T-cell (primary cell): ENCODE measurements at regions of chr2 and their contacts with region 1.

Region 1: GRCh38 chr2:68751397-68752339 is 17.1 kb downstream of the ARHGAP25 start:
- DNase-seq: peak; percentile 72 to 97 (median 89)
- ATAC-seq: peak; percentile 86 to 95 (median 88)
- H3K4me3 ChIP-seq: peak overlapping the region in 1 of 2 donors; percentile 20
- H3K4me3 Mint-ChIP-seq: peak overlapping the region; percentile 9 to 77 (median 43)
- H3K27ac ChIP-seq: peak overlapping the region; percentile 73
- H3K27ac Mint-ChIP-seq: peak overlapping the region; percentile 94 to 95
- H3K4me1 ChIP-seq: peaks cover 51 to 70% of the 10 kb centered on the region in 2 experiments
- H3K4me1 Mint-ChIP-seq: peaks cover 85 to 96% (median 94%) of the 10 kb centered on the region in 3 donors
- H3K27me3 ChIP-seq: no peaks in the 10 kb centered on the region
- H3K27me3 Mint-ChIP-seq: no peaks in the 10 kb centered on the region

Region 2: GRCh38 chr2:68441179-68441993 is 310.3 kb before region 1 on chr2:
- CTCF ChIA-PET with region 1: no interaction called
- POLR2A ChIA-PET with region 1: no interaction called
- DNase-seq: peak; percentile 47 to 95 (median 77)
- ATAC-seq: peak; percentile 92 to 97 (median 95)
- H3K4me3 ChIP-seq: no peak overlapping the region
- H3K4me3 Mint-ChIP-seq: no peak overlapping the region
- H3K27ac ChIP-seq: peak overlapping the region; percentile 67
- H3K27ac Mint-ChIP-seq: peak overlapping the region; percentile 71 to 87
- H3K4me1 ChIP-seq: peaks cover 0 to 12% of the 10 kb centered on the region in 2 experiments
- H3K4me1 Mint-ChIP-seq: peaks cover 0 to 24% (median 8%) of the 10 kb centered on the region in 3 donors
- H3K27me3 ChIP-seq: no peaks in the 10 kb centered on the region
- H3K27me3 Mint-ChIP-seq: no peaks in the 10 kb centered on the region

Region 3: GRCh38 chr2:68734688-68735525 is 16.8 kb before region 1 on chr2 and contains the start of gene ARHGAP25:
- CTCF ChIA-PET with region 1: interaction called, 19 to 78 read pairs
- POLR2A ChIA-PET with region 1: interaction called in 1 of 2 experiments, 3 read pairs
- DNase-seq: peak in 31 of 35 experiments; percentile 13 to 71 (median 40)
- ATAC-seq: peak; percentile 73 to 80 (median 78)
- H3K4me3 ChIP-seq: peak within 1 kb of the TSS; percentile 57 to 81
- H3K4me3 Mint-ChIP-seq: no peak within 1 kb of the TSS
- H3K27ac ChIP-seq: peak within 1 kb of the TSS; percentile 83
- H3K27ac Mint-ChIP-seq: no peak within 1 kb of the TSS
- H3K4me1 ChIP-seq: peaks cover 42 to 44% of the 10 kb centered on the region in 2 experiments
- H3K4me1 Mint-ChIP-seq: peaks cover 32 to 44% (median 43%) of the 10 kb centered on the region in 3 donors
- H3K27me3 ChIP-seq: no peaks in the 10 kb centered on the region
- H3K27me3 Mint-ChIP-seq: no peaks in the 10 kb centered on the region
- total RNA-seq, gene ARHGAP25: 103 to 134 (median 123) TPM

Region 4: DNA sequence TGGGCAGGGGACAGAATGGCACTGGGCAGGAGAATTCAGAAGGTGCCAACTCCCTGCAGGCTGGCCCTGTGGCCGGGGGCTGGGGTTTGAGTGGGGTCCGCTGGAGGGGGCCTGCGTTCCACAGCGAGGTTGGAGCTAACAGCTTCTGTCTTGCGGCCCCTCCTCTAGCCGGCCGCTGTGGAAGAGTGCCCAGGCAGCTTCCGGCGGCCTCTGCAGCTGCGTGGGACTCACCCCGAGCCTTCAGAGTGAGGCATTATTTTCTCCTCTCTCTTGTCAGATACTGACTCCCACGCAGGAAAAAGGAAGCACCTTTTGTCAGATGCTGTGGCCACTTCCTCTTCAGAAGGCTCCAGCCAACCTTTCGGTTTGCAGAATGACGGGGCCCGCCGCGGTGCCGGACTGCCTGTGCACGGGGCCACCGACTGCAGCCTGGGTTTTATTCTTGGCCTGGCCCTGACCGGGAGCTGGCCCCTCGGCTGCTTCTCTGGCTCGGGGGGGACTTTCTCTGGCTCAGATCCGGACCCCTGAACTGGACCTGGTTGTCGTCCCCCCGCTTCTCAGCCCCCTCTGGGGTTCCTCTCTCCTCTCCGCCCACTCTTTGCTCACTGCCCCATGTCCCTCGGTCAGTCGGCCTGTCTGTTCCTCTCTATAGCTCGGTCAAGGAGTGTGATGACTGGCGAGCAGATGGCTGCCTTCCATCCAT is 23.1 kb after region 1 on chr2:
- CTCF ChIA-PET with region 1: interaction called, 4 to 49 read pairs
- POLR2A ChIA-PET with region 1: interaction called in 1 of 2 experiments, 16 read pairs
- DNase-seq: peak in 29 of 35 experiments; percentile 24 to 74 (median 39)
- ATAC-seq: peak; percentile 64 to 79 (median 74)
- H3K4me3 ChIP-seq: peak overlapping the region; percentile 49 to 64
- H3K4me3 Mint-ChIP-seq: peak overlapping the region; percentile 78 to 83 (median 83)
- H3K27ac ChIP-seq: peak overlapping the region; percentile 95
- H3K27ac Mint-ChIP-seq: peak overlapping the region; percentile 99
- H3K4me1 ChIP-seq: peaks cover 61 to 83% of the 10 kb centered on the region in 2 experiments
- H3K4me1 Mint-ChIP-seq: peaks cover 88 to 92% (median 92%) of the 10 kb centered on the region in 3 donors
- H3K27me3 ChIP-seq: no peaks in the 10 kb centered on the region
- H3K27me3 Mint-ChIP-seq: no peaks in the 10 kb centered on the region

Region 5: DNA sequence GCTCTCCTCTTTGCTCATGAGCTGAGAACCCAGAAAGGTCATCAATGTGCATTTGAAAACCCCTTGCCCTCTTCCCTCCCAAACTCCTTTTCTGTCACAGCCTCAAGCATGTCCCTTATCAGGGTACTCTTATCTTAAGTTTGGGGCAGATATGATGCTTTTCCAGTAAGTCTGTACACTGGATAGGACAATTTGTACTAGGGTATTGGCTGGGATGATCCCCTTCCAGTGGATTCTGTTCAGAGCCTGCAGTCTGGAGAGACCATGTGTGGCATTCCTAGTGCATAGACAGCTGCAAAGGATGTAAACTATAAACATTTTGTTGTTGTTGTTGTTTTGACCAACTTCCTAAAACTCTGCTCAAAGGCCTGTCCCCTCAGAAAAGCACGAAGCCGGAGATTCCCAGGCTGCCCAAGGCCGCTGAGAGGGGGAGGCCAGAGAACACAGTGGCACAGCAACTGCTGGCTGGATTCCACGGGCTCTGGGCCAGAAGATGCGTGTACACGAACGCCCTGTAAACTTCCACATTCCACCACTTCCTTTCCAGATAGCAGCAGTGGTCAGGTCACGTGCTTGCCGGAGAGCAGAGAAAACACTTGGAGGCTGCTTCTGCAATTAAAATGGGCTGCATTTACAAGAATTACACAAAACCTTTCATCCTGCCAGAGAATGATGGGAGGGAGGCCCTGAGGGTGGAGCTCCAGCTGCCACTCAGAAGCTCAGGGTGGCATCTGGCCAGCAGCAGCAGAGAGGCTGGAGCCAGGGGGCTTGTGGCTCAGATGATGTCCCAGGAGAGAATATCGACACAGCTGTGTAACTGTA is 77.4 kb after region 1 on chr2:
- CTCF ChIA-PET with region 1: interaction called, 4 to 13 read pairs
- POLR2A ChIA-PET with region 1: interaction called in 1 of 2 experiments, 4 read pairs
- DNase-seq: peak; percentile 45 to 85 (median 72)
- ATAC-seq: peak; percentile 75 to 88 (median 82)
- H3K4me3 ChIP-seq: peak overlapping the region in 1 of 2 donors; percentile 4
- H3K4me3 Mint-ChIP-seq: peak overlapping the region; percentile 64 to 86 (median 64)
- H3K27ac ChIP-seq: peak overlapping the region; percentile 80
- H3K27ac Mint-ChIP-seq: peak overlapping the region; percentile 96 to 99
- H3K4me1 ChIP-seq: peaks cover 23 to 47% of the 10 kb centered on the region in 2 experiments
- H3K4me1 Mint-ChIP-seq: peaks cover 63 to 81% (median 78%) of the 10 kb centered on the region in 3 donors
- H3K27me3 ChIP-seq: no peaks in the 10 kb centered on the region
- H3K27me3 Mint-ChIP-seq: no peaks in the 10 kb centered on the region

Region 6: DNA sequence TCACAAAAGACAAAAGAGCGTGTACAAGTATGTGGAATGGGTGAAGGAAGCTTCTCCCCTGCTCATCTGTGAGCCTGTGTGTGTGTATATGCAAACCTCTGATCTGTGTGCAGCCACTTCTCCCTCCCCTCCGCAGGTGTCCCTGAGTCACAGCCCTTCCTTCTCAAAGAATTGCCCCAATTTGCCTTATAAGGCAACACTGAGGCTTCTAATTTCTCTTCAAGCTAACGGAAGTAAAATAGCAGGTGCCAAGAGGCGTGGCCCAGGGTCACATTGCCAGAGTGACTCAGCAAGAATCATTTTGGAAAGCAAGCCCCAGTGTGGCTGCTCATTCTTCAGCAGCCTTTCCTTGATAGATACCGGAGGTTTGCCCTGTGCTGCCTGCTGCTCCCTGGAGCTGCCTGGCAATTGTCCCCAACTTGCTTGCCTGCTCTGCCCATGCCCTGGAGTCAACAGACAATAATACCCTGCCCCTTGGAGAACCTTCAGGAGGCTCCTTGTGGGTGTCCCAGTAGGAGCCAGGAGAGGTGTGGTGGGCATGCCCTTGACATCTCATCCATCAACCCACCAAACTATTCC is 156.8 kb after region 1 on chr2:
- CTCF ChIA-PET with region 1: interaction called, 6 to 18 read pairs
- POLR2A ChIA-PET with region 1: interaction called in 1 of 2 experiments, 3 read pairs
- DNase-seq: peak; percentile 68 to 91 (median 82)
- ATAC-seq: peak; percentile 96 to 98 (median 97)
- H3K4me3 ChIP-seq: no peak overlapping the region
- H3K4me3 Mint-ChIP-seq: peak overlapping the region in 2 of 3 donors; percentile 11 to 63
- H3K27ac ChIP-seq: peak overlapping the region; percentile 79
- H3K27ac Mint-ChIP-seq: peak overlapping the region; percentile 94 to 95
- H3K4me1 ChIP-seq: peaks cover 27 to 49% of the 10 kb centered on the region in 2 experiments
- H3K4me1 Mint-ChIP-seq: peaks cover 33 to 41% (median 36%) of the 10 kb centered on the region in 3 donors
- H3K27me3 ChIP-seq: no peaks in the 10 kb centered on the region
- H3K27me3 Mint-ChIP-seq: no peaks in the 10 kb centered on the region